ENCODE measurements at regions of chr5 and their contacts with region 1.

Region 1: DNA sequence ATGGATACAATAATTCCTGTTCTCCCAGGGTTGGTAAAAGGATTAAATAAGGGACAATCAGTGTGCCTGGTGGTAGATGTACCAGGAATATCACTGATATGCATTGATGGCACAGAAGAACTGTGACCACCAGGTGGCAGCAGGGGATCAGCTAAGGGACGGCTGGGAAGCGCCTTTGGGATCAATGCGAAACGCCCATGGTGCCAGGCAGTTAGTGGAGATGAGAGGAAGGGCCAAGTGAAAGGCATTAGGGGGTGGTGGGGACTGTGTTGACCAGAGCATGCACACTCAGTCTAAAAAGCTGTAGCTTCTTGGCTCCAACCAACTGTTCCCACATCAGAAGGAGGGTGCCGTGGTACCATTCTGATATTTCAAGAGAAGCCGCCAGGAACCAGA is 55.6 kb downstream of the ARHGEF37 start:
- DNase-seq: peak; percentile 41
- ATAC-seq: peak; percentile 43 to 49

Region 2: DNA sequence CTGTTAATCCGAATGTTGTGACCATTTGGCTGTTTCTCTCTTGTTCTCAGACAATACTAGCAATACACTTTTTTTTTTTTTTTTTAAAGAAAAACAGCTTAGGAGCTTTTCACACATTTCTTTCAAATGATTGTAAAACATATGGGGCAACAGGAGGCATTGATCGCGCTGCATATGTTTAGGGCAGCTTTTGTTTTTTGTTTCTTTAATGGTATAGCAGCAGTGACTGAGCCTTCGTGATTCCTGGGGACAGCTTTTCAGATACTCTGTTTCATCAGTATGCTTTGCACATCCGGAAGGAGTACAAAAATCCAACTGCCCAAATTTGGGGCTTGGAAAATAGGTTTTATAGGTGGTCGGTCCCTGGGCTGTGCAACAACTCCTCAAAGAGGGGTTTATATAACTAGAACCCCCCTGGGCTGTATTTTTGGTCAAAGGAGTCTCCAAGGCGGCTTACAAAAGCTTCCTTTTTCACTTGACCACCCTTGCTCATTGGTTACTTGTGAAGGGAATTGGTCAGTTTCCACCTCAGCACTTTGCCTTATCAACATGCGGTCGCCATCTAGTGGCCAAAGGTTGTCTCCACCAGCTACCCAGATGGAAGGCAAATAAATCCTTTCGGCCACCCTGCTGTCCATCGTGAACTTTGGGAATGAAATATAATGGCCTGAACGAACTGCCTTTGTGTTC is 215.9 kb after region 1 on chr5:
- intact Hi-C with region 1: loop called in 1 of 2 experiments (anchors 5 kb)
- DNase-seq: peak; percentile 80
- ATAC-seq: peak; percentile 63 to 65

Region 3: GRCh38 chr5:149960272-149961185 is 323.7 kb after region 1 on chr5 and contains the start of gene SLC26A2:
- intact Hi-C with region 1: loop called in 1 of 2 experiments (anchors 10 kb)
- DNase-seq: peak; percentile 98
- ATAC-seq: peak; percentile 100
- total RNA-seq, gene SLC26A2: 6.3 to 12.6 TPM

Region 4: GRCh38 chr5:149990518-149991376 is 353.9 kb after region 1 on chr5:
- intact Hi-C with region 1: loop called in 1 of 2 experiments (anchors 2 kb)
- DNase-seq: peak; percentile 77
- ATAC-seq: peak; percentile 82 to 85